Ovary (tissue), 10 donors: ENCODE measurements at regions of chr11 and their contacts with region 1.

Region 1: GRCh38 chr11:67656278-67656922 is 5.9 kb upstream of the ACY3 start:
- DNase-seq: no peak
- H3K4me3 ChIP-seq: no peak overlapping the region
- H3K27ac ChIP-seq: no peak overlapping the region
- H3K4me1 ChIP-seq: no peaks in the 10 kb centered on the region
- H3K27me3 ChIP-seq: no peaks in the 10 kb centered on the region
- CTCF ChIP-seq: no peak
- EP300 ChIP-seq: no peak
- POLR2A ChIP-seq: no peak

Region 2: DNA sequence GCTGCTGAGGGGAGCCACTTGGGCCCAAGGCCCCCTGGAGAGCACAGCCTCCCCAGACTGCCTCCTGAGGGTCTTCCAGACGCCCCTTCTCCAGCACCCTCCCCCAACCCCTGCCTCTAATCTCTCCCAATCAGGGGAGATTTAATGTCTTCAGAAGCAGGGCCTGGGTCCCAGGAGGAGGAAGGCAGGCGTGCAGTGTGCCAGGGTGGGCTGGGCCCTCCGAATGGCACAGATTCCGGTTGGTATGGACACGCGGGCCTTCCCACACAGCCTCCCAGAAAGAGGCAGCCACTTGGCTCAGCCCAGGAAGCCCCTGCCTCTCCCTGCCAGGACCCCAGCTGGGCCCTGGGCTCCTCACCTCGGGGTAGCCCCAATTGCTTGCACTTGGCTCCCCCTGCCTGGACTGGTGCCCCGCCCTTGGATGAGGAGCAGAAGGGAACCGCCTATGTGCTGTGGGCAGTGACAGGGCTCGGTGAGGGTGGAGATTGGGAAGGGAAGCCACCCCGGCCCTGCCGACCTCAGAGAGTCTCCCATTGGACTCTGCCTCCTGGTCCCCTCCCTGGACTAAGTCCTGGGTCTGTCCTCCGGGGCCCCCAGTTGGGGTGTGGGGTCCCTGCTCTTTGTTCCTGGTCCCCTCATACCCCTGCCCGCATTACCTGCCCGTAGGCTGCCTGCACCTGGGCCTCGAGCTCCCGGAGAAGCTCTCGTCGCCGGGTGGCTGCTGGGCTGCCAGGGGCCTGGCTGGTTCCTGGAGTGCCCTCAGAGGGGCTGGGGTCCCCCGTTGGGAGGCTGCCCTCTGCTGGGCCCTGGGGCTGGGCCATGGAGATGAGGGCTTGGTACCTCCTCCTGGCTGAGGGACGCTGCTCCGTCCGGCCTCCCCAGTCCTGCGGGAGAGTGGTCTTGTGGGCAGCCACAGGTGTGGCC is 132.6 kb before region 1 on chr11:
- intact Hi-C with region 1: no loop called
- DNase-seq: no peak
- H3K4me3 ChIP-seq: no peak overlapping the region
- H3K27ac ChIP-seq: no peak overlapping the region
- H3K4me1 ChIP-seq: no peaks in the 10 kb centered on the region
- H3K27me3 ChIP-seq: no peaks in the 10 kb centered on the region
- CTCF ChIP-seq: no peak
- EP300 ChIP-seq: no peak
- POLR2A ChIP-seq: no peak

Region 3: GRCh38 chr11:67572747-67573419 is 83.5 kb before region 1 on chr11:
- intact Hi-C with region 1: loop called in 2 of 4 experiments (anchors 5 to 10 kb)
- DNase-seq: peak in 3 of 5 donors; percentile 45 to 52 (median 47)
- H3K4me3 ChIP-seq: no peak overlapping the region
- H3K27ac ChIP-seq: no peak overlapping the region
- H3K4me1 ChIP-seq: no peaks in the 10 kb centered on the region
- H3K27me3 ChIP-seq: no peaks in the 10 kb centered on the region
- CTCF ChIP-seq: peak; percentile 38 to 43 (median 40)
- EP300 ChIP-seq: no peak
- POLR2A ChIP-seq: no peak